RWPE1 (cell line): ENCODE measurements at regions of chr9 and their contacts with region 1.

Region 1: GRCh38 chr9:124617471-124618141 is 110.4 kb upstream of the NR5A1 start:
- DNase-seq: peak; percentile 93
- H3K27ac ChIP-seq: no peak overlapping the region
- CTCF ChIP-seq: peak; percentile 99

Region 2: GRCh38 chr9:124022201-124023121 is 595.1 kb before region 1 on chr9:
- CTCF ChIA-PET with region 1: no interaction called
- POLR2A ChIA-PET with region 1: no interaction called
- DNase-seq: no peak
- H3K27ac ChIP-seq: no peak overlapping the region
- CTCF ChIP-seq: no peak

Region 3: DNA sequence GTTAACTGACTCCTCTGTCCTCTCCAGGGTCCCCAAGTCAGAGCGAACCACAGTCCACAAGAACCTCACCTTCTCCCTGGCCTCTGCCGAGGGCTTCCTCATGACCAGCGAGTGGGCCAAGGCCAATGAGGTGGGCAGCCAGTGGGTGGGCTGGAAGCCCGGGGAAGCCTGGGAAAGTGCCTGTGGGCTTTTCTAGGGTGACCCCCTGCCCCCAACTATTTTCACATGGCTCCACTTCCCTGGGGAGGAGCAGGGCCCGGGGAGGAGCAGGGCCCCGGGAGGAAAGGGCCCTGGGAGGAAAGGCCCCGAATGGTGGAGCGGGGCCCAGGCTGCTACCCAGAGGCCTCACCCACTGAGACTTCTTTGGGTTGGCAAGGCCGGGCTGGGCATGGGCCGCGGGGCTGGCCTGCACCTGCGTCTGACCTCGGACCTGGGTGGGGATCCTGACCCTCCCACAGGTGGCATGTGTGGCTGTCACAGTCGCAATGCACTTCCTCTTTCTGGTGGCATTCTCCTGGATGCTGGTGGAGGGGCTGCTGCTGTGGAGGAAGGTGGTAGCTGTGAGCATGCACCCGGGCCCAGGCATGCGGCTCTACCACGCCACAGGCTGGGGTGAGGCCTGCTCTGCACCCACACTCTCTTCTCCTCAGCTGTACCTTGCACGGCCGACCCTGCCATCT is 149.4 kb before region 1 on chr9:
- CTCF ChIA-PET with region 1: no interaction called
- POLR2A ChIA-PET with region 1: no interaction called
- DNase-seq: no peak
- H3K27ac ChIP-seq: no peak overlapping the region
- CTCF ChIP-seq: no peak

Region 4: GRCh38 chr9:124551472-124552272 is 65.9 kb before region 1 on chr9:
- CTCF ChIA-PET with region 1: interaction called, 10 read pairs
- POLR2A ChIA-PET with region 1: no interaction called
- DNase-seq: peak; percentile 82
- H3K27ac ChIP-seq: no peak overlapping the region
- CTCF ChIP-seq: peak; percentile 72

Region 5: DNA sequence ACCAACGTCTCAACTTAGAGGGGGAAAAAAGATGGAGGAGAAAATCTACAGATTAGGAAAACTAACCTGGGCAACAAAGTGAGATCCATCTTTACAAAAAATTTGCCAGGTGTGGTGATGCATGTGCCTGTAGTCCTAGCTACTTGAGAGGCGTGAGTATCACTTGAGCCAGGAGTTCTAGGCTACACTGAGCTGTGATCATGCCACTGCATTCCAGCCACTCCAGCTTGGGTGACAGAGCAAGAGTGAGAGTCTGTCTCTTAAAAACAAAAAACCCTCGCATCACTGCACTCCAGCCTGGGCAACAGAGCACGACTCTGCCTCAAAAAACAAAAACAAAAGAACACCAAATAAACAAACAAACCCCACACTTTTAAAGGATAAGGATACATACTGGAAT is 12.3 kb before region 1 on chr9:
- CTCF ChIA-PET with region 1: interaction called, 12 read pairs
- POLR2A ChIA-PET with region 1: no interaction called
- DNase-seq: no peak
- H3K27ac ChIP-seq: no peak overlapping the region
- CTCF ChIP-seq: no peak

Region 6: DNA sequence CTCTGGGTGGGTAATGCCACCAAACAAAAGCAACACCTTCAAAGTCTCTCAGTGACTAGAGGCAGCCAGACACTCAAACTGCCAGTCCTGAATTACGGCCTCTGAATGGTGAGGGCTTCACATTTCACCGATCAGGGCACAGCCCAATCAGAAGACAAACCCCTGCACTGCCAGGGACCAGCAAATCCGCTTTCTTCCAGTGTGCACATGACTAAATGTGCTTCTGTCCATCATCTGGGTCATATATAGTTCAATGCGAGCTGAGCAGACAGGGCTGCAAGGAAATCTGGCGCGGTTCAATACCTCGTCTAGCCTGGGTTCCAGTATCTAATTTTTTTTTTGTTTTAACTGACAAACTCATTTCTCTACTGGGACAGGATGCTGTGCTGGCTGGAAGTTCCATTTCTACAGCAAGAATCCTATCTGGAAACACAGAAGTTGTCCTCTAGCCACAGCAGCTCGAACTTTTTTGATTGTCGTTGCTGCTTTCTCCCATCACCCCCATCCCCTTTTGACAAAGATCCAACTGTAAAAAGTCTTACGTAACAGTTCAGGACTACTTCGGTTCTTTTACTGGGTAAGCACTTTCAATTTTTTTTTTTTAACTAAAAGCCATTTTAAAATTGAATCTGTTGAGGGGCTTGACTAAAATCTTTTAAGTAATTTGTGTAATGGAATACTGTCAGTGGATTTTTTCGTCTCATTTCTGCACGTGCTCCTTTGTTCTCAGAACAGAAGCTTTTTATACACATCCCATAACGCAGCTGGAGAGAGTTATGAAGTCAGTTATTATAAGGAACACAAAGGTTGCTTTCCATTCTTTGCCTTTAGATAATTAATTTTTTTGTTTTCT is 40.8 kb after region 1 on chr9:
- CTCF ChIA-PET with region 1: interaction called, 19 read pairs
- POLR2A ChIA-PET with region 1: interaction called, 5 read pairs
- DNase-seq: peak; percentile 99
- H3K27ac ChIP-seq: peak overlapping the region; percentile 97
- CTCF ChIP-seq: no peak

Region 7: GRCh38 chr9:124708633-124709291 is 91.2 kb after region 1 on chr9:
- CTCF ChIA-PET with region 1: interaction called, 65 read pairs
- POLR2A ChIA-PET with region 1: no interaction called
- DNase-seq: no peak
- H3K27ac ChIP-seq: no peak overlapping the region
- CTCF ChIP-seq: no peak

Region 8: DNA sequence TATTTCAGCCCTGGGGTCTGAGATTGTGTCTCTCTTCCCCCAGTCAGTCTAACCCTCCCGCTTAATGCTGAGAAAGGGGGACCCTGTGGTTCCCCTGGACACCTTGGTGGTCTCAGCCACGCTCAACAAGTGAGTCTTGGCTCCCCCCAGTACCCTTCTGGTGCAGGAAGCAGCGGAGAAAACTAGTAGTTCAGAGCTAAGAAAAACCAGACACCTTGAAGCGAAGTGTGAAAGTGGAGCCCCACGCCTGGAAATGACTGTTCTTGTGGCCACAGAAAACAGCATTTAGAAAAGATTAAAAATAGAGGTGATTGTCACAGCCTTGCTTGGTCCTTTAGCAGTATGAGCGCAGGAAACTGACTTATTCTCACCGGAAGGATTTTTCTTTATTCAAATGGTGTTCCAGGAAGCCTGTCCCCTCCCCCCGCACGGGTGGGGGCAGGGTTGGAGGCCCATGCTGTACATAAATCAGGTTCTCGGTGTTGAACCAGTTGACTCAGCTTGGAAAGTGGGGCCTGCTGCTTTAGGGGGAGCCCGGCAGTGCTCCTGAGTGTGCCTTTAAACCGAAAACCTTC is 252.5 kb after region 1 on chr9:
- CTCF ChIA-PET with region 1: no interaction called
- POLR2A ChIA-PET with region 1: no interaction called
- DNase-seq: no peak
- H3K27ac ChIP-seq: peak overlapping the region; percentile 99
- CTCF ChIP-seq: no peak